GM10248 (cell line): ENCODE measurements at regions of chr15 and their contacts with region 1.

Region 1: GRCh38 chr15:45402162-45402954 is 24.0 kb upstream of the GATM start:
- DNase-seq: peak; percentile 96
- CTCF ChIP-seq: no peak

Region 2: DNA sequence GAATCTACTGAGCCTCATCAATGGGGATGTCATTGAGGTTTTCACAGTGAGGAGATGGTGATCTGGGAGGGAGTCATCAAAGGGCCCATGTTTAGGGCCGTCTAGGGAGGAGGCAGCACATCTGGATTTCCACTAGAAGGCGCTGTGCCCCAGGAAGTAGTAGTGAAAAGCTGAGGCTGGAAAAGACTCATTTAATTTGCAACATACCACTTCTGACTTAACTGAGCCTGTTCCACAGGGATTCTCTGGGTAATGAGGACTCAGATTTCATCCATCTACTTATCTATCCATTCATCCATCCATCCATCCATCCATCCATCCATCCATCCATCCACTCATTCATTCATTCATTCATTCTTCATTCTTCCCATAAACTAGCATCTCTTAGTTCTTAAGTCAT is 197.2 kb before region 1 on chr15:
- CTCF ChIA-PET with region 1: interaction called, 42 read pairs
- POLR2A ChIA-PET with region 1: interaction called, 5 read pairs
- DNase-seq: peak; percentile 69
- CTCF ChIP-seq: peak; percentile 86

Region 3: GRCh38 chr15:45307230-45307924 is 95.0 kb before region 1 on chr15:
- CTCF ChIA-PET with region 1: interaction called, 13 read pairs
- POLR2A ChIA-PET with region 1: no interaction called
- DNase-seq: peak; percentile 45
- CTCF ChIP-seq: peak; percentile 33

Region 4: GRCh38 chr15:45314960-45315359 is 87.4 kb before region 1 on chr15:
- CTCF ChIA-PET with region 1: interaction called, 17 read pairs
- POLR2A ChIA-PET with region 1: no interaction called
- DNase-seq: no peak
- CTCF ChIP-seq: peak; percentile 19

Region 5: GRCh38 chr15:45378149-45378912 is 24.0 kb before region 1 on chr15 and contains the start of gene GATM:
- CTCF ChIA-PET with region 1: interaction called, 59 read pairs
- POLR2A ChIA-PET with region 1: interaction called, 10 read pairs
- DNase-seq: peak; percentile 94
- CTCF ChIP-seq: no peak

Region 6: GRCh38 chr15:45386420-45386819 is 15.9 kb before region 1 on chr15:
- CTCF ChIA-PET with region 1: interaction called, 59 read pairs
- POLR2A ChIA-PET with region 1: no interaction called
- DNase-seq: no peak
- CTCF ChIP-seq: no peak

Region 7: DNA sequence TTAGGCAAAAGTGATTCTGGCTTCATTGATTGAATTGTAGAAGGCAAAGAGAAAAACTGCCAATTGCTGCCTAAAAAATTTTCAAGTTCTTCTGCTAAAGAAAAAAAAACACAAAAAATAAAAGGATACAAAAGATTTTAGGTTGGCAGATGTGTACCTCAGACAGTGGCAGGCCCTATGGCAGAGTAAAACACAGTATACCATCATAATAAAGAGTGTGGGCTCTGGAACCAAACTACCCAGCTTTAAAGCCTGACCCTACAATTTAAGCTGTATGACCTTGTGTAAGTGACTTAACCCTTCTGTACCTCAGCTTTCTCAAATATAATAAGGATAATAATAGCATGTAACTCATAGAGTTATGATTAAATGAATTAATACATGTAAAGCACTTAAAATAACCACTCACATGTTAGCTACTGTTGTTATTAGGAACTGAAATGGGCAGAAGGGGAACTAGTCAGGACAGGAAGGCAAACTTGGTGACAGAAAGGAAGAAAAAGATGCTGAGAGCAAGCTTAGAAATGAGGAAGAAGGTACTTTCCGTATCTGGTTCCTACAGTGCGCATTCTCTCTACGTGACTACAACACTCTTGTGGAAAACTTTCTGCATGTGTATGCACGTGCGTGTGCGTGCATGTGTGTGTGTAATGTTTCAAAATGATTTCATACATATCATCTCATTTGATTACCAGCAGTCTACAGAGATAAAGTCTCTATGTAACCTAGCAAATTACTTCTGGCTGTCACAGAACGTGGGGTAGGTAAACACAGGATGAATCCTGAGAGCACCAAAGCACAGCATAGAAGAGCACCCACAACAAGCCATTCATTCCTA is 10.4 kb before region 1 on chr15:
- CTCF ChIA-PET with region 1: interaction called, 59 read pairs
- POLR2A ChIA-PET with region 1: interaction called, 4 read pairs
- DNase-seq: peak; percentile 66
- CTCF ChIP-seq: no peak

Region 8: DNA sequence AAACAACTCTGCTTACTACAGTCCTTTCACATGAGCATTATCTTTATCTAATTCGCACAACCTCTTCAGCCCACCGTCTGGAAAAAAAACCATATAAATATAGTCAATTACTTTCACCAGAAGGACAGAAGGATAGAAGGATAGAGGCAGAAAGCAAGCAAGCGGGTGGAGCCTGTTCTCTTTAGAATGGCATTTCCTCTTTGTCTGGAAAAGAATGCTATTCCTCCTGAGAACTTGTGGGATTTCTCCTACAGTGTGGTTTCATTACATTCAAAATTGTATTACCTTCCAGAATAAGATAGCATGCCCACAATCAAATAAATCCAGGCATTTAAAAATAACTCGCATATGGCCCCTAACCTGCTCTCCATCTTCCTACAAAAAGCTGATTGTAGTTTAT is 97.1 kb after region 1 on chr15:
- CTCF ChIA-PET with region 1: no interaction called
- POLR2A ChIA-PET with region 1: no interaction called
- DNase-seq: no peak
- CTCF ChIP-seq: no peak